CD4-positive, alpha-beta T cell (primary cell): ENCODE measurements at regions of chr15 and their contacts with region 1.

Region 1: DNA sequence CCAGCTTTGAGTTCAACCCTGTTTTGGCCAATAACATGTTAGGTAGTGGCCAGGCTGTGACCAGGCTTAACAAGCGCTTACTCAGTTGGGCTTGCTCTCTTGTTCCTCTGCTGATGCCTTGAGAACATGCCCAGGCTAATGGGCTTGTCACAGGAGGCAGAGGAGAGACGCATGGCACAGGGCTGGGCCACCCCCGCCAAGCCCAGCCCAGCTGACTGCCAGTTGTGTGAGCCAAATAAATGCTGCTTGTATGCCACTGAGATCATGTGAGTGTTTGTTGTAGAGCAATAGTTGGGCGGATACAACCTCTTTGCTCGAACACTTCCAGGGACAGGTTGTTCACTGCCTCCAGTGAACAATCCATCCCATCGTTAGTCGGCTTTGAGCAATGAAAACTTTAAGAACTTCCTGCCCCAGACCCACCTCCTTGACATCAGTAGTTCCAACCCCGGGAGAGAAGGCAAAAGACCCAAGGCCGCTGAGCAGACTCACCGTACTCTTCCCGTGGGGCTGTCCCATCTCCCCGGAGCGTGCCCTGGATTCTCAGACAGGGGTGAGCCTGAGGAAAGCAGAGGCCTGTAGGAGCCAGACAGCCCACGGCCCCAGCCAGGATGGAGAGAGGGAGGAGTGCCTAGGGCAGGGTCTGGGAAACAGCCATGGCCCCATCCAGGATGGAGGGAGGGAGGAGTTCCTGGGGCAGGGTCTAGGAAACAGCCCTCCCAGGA is 4.1 kb downstream of the PLA2G4F start:
- DNase-seq: no peak
- ATAC-seq: no peak
- H3K4me3 ChIP-seq: no peak overlapping the region
- H3K4me3 Mint-ChIP-seq: no peak overlapping the region
- H3K27ac ChIP-seq: no peak overlapping the region
- H3K27ac Mint-ChIP-seq: no peak overlapping the region
- H3K4me1 ChIP-seq: no peaks in the 10 kb centered on the region
- H3K4me1 Mint-ChIP-seq: no peaks in the 10 kb centered on the region
- H3K27me3 ChIP-seq: no peaks in the 10 kb centered on the region
- H3K27me3 Mint-ChIP-seq: no peaks in the 10 kb centered on the region
- CTCF ChIP-seq: no peak

Region 2: GRCh38 chr15:41523097-41523496 is 629.3 kb before region 1 on chr15:
- CTCF ChIA-PET with region 1: no interaction called
- POLR2A ChIA-PET with region 1: no interaction called
- intact Hi-C with region 1: loop called in 1 of 2 experiments (anchors 5 kb)
- DNase-seq: no peak
- ATAC-seq: no peak
- H3K4me3 ChIP-seq: no peak overlapping the region
- H3K4me3 Mint-ChIP-seq: no peak overlapping the region
- H3K27ac ChIP-seq: no peak overlapping the region
- H3K27ac Mint-ChIP-seq: no peak overlapping the region
- H3K4me1 ChIP-seq: no peaks in the 10 kb centered on the region
- H3K4me1 Mint-ChIP-seq: no peaks in the 10 kb centered on the region
- H3K27me3 ChIP-seq: no peaks in the 10 kb centered on the region
- H3K27me3 Mint-ChIP-seq: no peaks in the 10 kb centered on the region
- CTCF ChIP-seq: no peak

Region 3: DNA sequence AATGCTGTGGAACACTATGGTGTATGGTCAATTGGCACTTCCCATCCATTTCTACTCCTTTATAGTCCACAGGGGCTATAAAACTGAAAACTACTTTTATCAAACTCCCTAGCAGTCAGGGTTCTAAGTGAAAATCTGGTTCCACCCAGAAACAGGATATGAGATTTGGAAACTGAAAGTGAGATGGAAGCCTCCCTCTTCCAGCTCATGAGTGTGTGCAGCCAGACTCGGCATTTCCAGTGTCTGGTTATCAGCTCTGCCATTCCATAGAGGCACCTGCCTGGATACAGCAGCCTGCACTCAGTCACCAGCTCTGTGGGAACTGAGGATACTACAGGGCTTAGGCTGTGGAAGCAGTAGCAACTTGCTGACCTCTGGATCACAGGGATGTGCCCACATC is 18.8 kb after region 1 on chr15:
- CTCF ChIA-PET with region 1: no interaction called
- POLR2A ChIA-PET with region 1: no interaction called
- intact Hi-C with region 1: no loop called
- DNase-seq: peak in 1 of 14 experiments; percentile 16
- ATAC-seq: no peak
- H3K4me3 ChIP-seq: no peak overlapping the region
- H3K4me3 Mint-ChIP-seq: no peak overlapping the region
- H3K27ac ChIP-seq: no peak overlapping the region
- H3K27ac Mint-ChIP-seq: no peak overlapping the region
- H3K4me1 ChIP-seq: peaks cover 3% of the 10 kb centered on the region
- H3K4me1 Mint-ChIP-seq: peaks cover 9% of the 10 kb centered on the region
- H3K27me3 ChIP-seq: no peaks in the 10 kb centered on the region
- H3K27me3 Mint-ChIP-seq: no peaks in the 10 kb centered on the region
- CTCF ChIP-seq: no peak